Motor neuron (in vitro differentiated cells): ENCODE measurements at regions of chr18 and their contacts with region 1.

Region 1: GRCh38 chr18:11947214-11948191 is 33.8 kb upstream of the IMPA2 start:
- ATAC-seq: peak; percentile 81 to 96 (median 94)
- H3K4me3 ChIP-seq: peak overlapping the region in 1 of 5 donors; percentile 14
- H3K27ac ChIP-seq: no peak overlapping the region
- H3K4me1 ChIP-seq: peaks cover 0 to 3% of the 10 kb centered on the region in 2 donors

Region 2: GRCh38 chr18:11851146-11851805 is 96.2 kb before region 1 on chr18 and contains the start of gene CHMP1B:
- in situ Hi-C with region 1: loop called in 1 of 9 experiments (anchors 25 kb)
- ATAC-seq: peak; percentile 81 to 99 (median 94)
- H3K4me3 ChIP-seq: peak within 1 kb of the TSS; percentile 84 to 98 (median 92)
- H3K27ac ChIP-seq: peak within 1 kb of the TSS; percentile 79 to 81
- H3K4me1 ChIP-seq: peaks cover 18 to 22% of the 10 kb centered on the region in 2 donors
- total RNA-seq, gene CHMP1B: 27.6 to 57.4 (median 39.1) TPM

Region 3: DNA sequence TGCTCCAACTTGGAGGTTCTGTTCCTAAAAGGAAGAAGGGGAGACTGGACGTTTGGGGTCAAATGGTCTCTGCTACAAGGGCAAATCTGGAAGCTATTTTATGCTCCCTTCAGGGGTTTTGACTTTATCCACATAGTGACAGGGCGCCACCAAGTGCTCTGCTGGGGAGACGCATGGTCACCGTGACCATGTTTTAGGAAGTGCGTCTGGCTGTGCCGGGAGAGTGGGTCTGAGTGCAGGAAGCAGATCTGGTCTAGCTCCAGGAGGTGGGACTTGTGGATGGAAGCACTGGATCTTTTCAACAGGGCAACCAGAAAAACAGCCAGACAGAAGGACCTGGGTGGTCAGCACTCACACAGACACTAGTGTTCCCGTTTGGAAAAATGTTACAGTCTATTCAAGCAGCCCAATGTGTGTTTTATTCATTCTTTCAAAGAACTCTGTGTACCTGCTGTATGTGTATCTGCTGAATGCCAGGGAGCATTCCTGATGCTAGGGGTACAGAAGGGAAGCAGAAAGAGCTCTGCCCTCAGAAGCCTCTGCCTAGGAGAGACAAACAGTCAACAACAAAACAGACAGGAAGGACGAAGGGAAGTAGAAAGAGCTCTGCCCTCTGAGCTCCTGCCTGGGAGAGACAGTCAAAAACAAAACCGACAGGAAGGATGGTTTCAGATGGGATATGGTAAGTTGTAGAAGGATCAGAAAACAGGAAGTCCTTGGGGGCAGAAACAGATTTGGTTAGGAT is 48.1 kb after region 1 on chr18:
- in situ Hi-C with region 1: loop called in 2 of 9 experiments (anchors 10 kb)
- ATAC-seq: peak; percentile 50 to 83 (median 76)
- H3K4me3 ChIP-seq: no peak overlapping the region
- H3K27ac ChIP-seq: no peak overlapping the region
- H3K4me1 ChIP-seq: peaks cover 5 to 7% of the 10 kb centered on the region in 2 donors